Sigmoid colon (tissue), 7 donors: ENCODE measurements at regions of chr15 and their contacts with region 1.

Region 1: DNA sequence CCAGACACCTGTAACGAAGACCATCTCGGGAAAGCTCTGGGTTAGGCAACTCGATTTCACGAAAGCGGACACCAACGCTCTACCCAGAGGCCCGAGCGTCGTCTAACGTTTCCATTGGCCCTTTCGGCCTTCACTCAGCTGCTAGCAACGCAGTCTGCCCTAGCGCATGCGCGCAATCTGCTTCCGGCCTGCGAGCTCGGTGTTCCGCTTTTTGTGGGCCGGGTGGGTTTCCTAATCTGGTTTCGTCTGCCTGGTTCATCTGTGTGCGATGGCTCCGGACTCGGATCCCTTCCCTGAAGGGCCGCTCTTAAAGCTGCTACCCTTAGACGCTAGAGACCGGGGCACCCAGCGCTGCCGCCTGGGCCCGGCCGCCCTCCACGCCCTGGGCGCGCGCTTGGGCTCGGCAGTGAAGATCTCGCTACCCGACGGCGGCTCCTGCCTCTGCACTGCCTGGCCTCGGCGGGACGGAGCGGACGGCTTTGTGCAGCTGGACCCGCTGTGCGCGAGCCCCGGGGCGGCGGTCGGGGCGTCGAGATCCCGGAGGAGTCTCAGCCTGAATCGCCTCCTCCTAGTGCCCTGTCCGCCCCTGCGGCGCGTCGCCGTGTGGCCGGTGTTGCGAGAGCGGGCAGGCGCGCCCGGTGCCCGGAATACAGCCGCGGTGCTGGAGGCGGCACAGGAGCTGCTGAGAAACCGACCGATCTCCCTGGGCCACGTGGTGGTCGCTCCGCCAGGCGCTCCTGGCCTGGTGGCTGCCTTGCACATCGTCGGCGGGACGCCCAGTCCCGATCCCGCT is 24.0 kb upstream of the GATM start:
- DNase-seq: peak; percentile 99
- H3K4me3 ChIP-seq: peak overlapping the region; percentile 70 to 96 (median 88)
- H3K27ac ChIP-seq: peak overlapping the region; percentile 90 to 96 (median 92)
- H3K4me1 ChIP-seq: peaks cover 0 to 37% (median 23%) of the 10 kb centered on the region in 4 donors
- H3K27me3 ChIP-seq: no peaks in the 10 kb centered on the region
- CTCF ChIP-seq: peak in 1 of 4 experiments; percentile 18
- EP300 ChIP-seq: no peak
- POLR2A ChIP-seq: peak; percentile 73 to 74

Region 2: DNA sequence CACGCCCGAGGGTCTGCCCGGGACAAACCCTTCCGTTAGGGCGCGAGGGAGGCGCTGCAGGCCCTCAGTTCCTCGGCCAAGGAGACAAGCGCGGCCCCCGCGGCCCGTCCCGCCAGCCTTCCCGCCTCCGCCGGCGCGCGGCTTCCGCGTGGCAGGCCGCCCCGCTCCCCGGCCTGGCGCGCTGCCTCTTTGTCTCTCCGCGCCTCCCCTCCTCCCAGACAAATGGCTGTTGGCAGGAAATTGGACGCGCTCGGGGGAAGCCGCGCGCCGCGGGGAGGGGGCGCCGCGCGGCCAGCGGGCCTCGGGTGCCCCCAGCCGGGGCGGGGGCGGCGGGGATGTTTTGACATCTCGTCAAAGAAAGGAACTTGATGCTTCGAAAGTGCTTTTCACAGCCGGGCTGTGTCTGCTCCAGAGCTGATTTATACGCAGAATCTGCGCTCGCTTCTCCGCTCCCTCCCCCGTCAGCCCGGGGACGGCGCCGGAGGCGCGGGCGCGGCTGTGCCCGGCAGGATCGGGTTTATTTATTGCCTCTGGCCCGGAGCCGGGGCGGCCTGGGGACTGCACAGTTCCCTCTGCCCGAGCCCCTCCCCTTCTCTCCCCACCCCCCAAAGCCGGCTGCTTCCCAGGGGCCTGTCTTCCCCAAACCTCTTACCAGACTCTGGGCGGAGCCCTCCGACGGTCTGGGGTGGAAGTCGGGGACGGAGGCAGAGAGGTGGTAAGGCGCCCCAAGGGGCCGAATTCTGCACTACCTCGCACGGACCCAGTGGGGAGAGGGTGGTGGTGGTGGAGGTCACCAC is 235.3 kb before region 1 on chr15:
- intact Hi-C with region 1: loop called (anchors 2 kb)
- DNase-seq: peak; percentile 95
- H3K4me3 ChIP-seq: peak overlapping the region; percentile 46 to 64 (median 56)
- H3K27ac ChIP-seq: peak overlapping the region; percentile 90 to 99 (median 96)
- H3K4me1 ChIP-seq: peaks cover 0 to 33% (median 21%) of the 10 kb centered on the region in 4 donors
- H3K27me3 ChIP-seq: no peaks in the 10 kb centered on the region
- CTCF ChIP-seq: peak; percentile 42 to 77 (median 70)
- EP300 ChIP-seq: no peak
- POLR2A ChIP-seq: peak in 1 of 2 donors; percentile 45

Region 3: GRCh38 chr15:45279024-45279698 is 123.2 kb before region 1 on chr15:
- intact Hi-C with region 1: loop called (anchors 1 kb)
- DNase-seq: peak; percentile 99
- H3K4me3 ChIP-seq: peak overlapping the region; percentile 50 to 59 (median 54)
- H3K27ac ChIP-seq: peak overlapping the region; percentile 80 to 90 (median 84)
- H3K4me1 ChIP-seq: peaks cover 0 to 16% (median 10%) of the 10 kb centered on the region in 4 donors
- H3K27me3 ChIP-seq: no peaks in the 10 kb centered on the region
- CTCF ChIP-seq: no peak
- EP300 ChIP-seq: no peak
- POLR2A ChIP-seq: peak; percentile 85 to 87

Region 4: GRCh38 chr15:45307230-45307924 is 95.0 kb before region 1 on chr15:
- intact Hi-C with region 1: loop called (anchors 5 kb)
- DNase-seq: no peak
- H3K4me3 ChIP-seq: peak overlapping the region in 2 of 4 donors; percentile 20 to 25
- H3K27ac ChIP-seq: peak overlapping the region in 1 of 4 donors; percentile 37
- H3K4me1 ChIP-seq: no peaks in the 10 kb centered on the region
- H3K27me3 ChIP-seq: peaks cover 0 to 5% (median 0%) of the 10 kb centered on the region in 3 donors
- CTCF ChIP-seq: peak; percentile 17 to 51 (median 45)
- EP300 ChIP-seq: no peak
- POLR2A ChIP-seq: no peak

Region 5: DNA sequence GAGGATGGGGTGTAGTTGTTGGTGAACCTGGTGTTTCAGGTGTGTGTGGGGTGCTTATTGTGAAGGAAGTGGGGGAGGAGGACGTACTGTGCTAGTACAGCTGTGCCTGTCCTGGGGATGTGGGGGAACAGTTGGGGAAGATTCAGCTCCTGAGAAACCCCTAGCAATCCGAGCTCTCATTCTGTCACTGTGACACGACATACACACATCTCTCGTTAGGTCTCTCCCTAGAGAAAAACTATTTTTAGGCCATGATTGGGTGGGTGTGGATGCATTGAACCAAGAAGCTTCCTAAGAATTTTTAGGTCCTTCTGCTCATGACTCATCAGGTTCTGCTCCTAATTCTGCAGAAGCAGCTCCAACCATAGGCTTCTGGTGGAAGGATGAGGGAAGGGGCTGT is 65.9 kb after region 1 on chr15:
- intact Hi-C with region 1: no loop called
- DNase-seq: no peak
- H3K4me3 ChIP-seq: no peak overlapping the region
- H3K27ac ChIP-seq: no peak overlapping the region
- H3K4me1 ChIP-seq: no peaks in the 10 kb centered on the region
- H3K27me3 ChIP-seq: peaks cover 0 to 38% (median 5%) of the 10 kb centered on the region in 3 donors
- CTCF ChIP-seq: no peak
- EP300 ChIP-seq: no peak
- POLR2A ChIP-seq: no peak

Region 6: DNA sequence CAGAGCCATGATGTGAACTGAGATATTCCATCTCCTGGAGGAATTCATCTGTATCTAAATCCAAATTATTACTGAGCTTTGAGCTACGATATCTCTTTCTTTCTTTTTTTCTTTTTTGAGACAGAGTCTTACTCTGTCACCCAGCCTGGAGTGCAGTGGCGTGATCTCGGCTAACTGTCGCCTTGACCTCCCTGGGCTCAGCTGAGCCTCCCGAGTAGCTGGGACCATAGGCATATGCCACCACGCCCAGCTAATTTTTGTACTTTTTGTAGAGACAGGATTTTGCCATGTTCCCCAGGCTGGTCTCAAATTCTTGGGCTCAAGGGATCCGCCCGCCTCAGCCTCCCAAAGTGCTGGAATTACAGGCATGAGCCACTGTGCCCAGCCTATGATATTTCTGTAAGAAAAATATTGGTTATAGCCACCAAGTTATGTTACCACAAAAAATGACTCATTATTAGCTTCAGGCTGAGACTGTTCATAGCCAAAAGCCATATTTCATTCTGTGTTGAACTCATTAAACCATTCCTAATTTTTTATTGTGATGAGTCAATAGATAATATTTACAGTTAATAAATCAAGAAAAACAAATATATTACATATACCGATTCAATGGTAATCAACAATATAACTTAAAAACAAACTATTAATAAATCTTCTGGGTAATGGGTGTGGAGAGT is 147.3 kb after region 1 on chr15:
- intact Hi-C with region 1: no loop called
- DNase-seq: no peak
- H3K4me3 ChIP-seq: no peak overlapping the region
- H3K27ac ChIP-seq: no peak overlapping the region
- H3K4me1 ChIP-seq: no peaks in the 10 kb centered on the region
- H3K27me3 ChIP-seq: no peaks in the 10 kb centered on the region
- CTCF ChIP-seq: no peak
- EP300 ChIP-seq: no peak
- POLR2A ChIP-seq: no peak